Heart right ventricle (tissue), 16 donors: ENCODE measurements at regions of chr1 and their contacts with region 1.

Region 1: GRCh38 chr1:93629099-93630059 is 52.3 kb downstream of the BCAR3 start:
- DNase-seq: peak in 1 of 2 donors; percentile 58
- ATAC-seq: peak; percentile 55 to 77 (median 64)
- H3K4me3 ChIP-seq: no peak overlapping the region
- H3K27ac ChIP-seq: no peak overlapping the region
- H3K4me1 ChIP-seq: peaks cover 7 to 36% (median 23%) of the 10 kb centered on the region in 9 donors
- H3K27me3 ChIP-seq: no peaks in the 10 kb centered on the region
- CTCF ChIP-seq: peak; percentile 60 to 93 (median 80)

Region 2: GRCh38 chr1:93304716-93305138 is 324.7 kb before region 1 on chr1:
- intact Hi-C with region 1: loop called in 3 of 10 experiments (anchors 5 to 10 kb)
- DNase-seq: peak in 1 of 2 donors; percentile 54
- ATAC-seq: peak in 5 of 8 donors; percentile 31 to 65 (median 52)
- H3K4me3 ChIP-seq: no peak overlapping the region
- H3K27ac ChIP-seq: no peak overlapping the region
- H3K4me1 ChIP-seq: peaks cover 0 to 5% (median 0%) of the 10 kb centered on the region in 9 donors
- H3K27me3 ChIP-seq: no peaks in the 10 kb centered on the region
- CTCF ChIP-seq: peak; percentile 84 to 96 (median 89)

Region 3: GRCh38 chr1:93447516-93448291 is 181.7 kb before region 1 on chr1 and contains the start of gene FNBP1L:
- intact Hi-C with region 1: loop called in 5 of 10 experiments (anchors 1 to 10 kb)
- DNase-seq: peak; percentile 81 to 83
- ATAC-seq: peak; percentile 94 to 97 (median 96)
- H3K4me3 ChIP-seq: peak within 1 kb of the TSS; percentile 71 to 100 (median 97)
- H3K27ac ChIP-seq: peak within 1 kb of the TSS; percentile 86 to 97 (median 91)
- H3K4me1 ChIP-seq: peaks cover 0 to 32% (median 21%) of the 10 kb centered on the region in 9 donors
- H3K27me3 ChIP-seq: peaks cover 0 to 24% (median 0%) of the 10 kb centered on the region in 7 donors
- CTCF ChIP-seq: no peak
- total RNA-seq, gene FNBP1L: 17.9 to 41.4 (median 24.1) TPM

Region 4: GRCh38 chr1:93680757-93681550 is 51.6 kb after region 1 on chr1:
- intact Hi-C with region 1: loop called in 9 of 10 experiments (anchors 2 to 10 kb)
- DNase-seq: peak; percentile 82 to 86
- ATAC-seq: peak; percentile 87 to 94 (median 91)
- H3K4me3 ChIP-seq: peak overlapping the region; percentile 73 to 95 (median 86)
- H3K27ac ChIP-seq: peak overlapping the region; percentile 78 to 96 (median 90)
- H3K4me1 ChIP-seq: peaks cover 9 to 58% (median 45%) of the 10 kb centered on the region in 9 donors
- H3K27me3 ChIP-seq: peaks cover 0 to 32% (median 0%) of the 10 kb centered on the region in 7 donors
- CTCF ChIP-seq: peak; percentile 42 to 74 (median 57)

Region 5: DNA sequence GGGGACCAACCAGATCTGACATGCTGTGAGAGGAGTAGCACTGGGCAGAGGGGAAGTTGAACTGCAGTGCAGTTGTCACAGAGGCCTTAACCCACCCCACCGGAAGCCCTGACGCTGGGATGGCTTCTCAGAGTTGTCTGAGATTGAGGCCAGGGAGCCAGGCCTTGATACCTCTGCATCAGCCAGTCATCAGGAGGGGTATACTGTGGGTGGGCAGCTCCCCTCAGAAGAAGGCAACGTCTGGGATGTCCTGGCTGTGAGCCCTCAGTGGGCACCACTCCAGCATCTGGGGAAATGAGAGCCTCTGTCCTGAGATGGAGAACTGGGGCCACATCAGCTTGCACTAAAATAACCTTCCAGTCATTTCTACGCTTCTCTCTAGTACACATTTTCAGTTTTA is 100.1 kb after region 1 on chr1:
- intact Hi-C with region 1: loop called in 3 of 10 experiments (anchors 5 to 10 kb)
- DNase-seq: no peak
- ATAC-seq: peak in 1 of 8 donors; percentile 40
- H3K4me3 ChIP-seq: no peak overlapping the region
- H3K27ac ChIP-seq: no peak overlapping the region
- H3K4me1 ChIP-seq: peaks cover 0 to 41% (median 7%) of the 10 kb centered on the region in 9 donors
- H3K27me3 ChIP-seq: no peaks in the 10 kb centered on the region
- CTCF ChIP-seq: no peak

Region 6: DNA sequence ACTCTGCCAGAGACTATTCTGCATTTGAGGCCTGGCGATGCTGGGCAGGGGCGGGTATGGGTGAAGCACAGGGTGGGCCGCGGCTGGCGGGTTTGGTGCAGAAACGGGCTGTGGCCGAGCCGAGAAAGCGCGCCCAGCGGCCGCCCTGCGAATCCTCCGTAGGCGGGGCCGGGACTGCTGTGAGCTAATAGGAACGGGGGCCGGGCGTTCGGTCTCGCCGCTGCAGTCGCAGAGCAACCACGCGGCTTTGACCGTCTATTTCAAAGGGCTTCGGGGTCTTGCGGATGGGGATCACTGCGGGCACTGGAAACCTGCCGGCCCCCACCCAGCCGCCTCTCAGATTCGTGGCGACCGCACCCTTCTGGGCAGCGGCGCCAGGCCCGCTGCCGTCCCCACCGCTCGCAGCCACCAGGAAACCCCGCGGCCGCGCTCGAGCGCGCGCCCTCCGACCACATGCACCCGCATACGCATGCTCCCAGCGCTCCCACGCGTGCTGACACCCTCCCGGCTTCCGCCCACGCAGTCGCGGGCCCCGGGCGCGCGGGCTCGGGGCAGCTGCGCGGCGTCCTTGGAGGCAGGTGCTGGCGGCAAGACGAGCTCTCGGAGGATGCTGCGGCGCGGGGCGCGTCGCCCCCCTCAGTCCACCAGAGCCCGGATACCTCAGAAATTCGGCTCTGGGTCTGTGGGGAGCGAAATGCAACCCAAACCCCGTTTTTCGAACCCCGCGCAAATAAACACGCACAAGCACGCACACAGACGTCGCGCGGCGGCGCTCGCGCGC is 217.0 kb after region 1 on chr1:
- intact Hi-C with region 1: loop called in 7 of 10 experiments (anchors 2 to 10 kb)
- DNase-seq: peak; percentile 89
- ATAC-seq: peak; percentile 64 to 81 (median 76)
- H3K4me3 ChIP-seq: peak overlapping the region; percentile 69 to 93 (median 86)
- H3K27ac ChIP-seq: peak overlapping the region; percentile 86 to 98 (median 96)
- H3K4me1 ChIP-seq: peaks cover 4 to 38% (median 31%) of the 10 kb centered on the region in 9 donors
- H3K27me3 ChIP-seq: no peaks in the 10 kb centered on the region
- CTCF ChIP-seq: peak in 7 of 9 donors; percentile 17 to 57 (median 40)